ENCODE measurements at regions of chr13 and their contacts with region 1.

Region 1: GRCh38 chr13:36858290-36858689 is 39.3 kb downstream of the RFXAP start:
- DNase-seq: peak; percentile 26
- H3K4me3 ChIP-seq: no peak overlapping the region
- H3K27ac ChIP-seq: no peak overlapping the region
- H3K4me1 ChIP-seq: no peaks in the 10 kb centered on the region
- H3K27me3 ChIP-seq: no peaks in the 10 kb centered on the region
- CTCF ChIP-seq: peak in 3 of 4 experiments; percentile 46 to 66 (median 53)
- POLR2A ChIP-seq: no peak

Region 2: GRCh38 chr13:36981156-36981743 is 123.0 kb after region 1 on chr13:
- intact Hi-C with region 1: loop called (anchors 2 kb)
- DNase-seq: no peak
- H3K4me3 ChIP-seq: no peak overlapping the region
- H3K27ac ChIP-seq: no peak overlapping the region
- H3K4me1 ChIP-seq: no peaks in the 10 kb centered on the region
- H3K27me3 ChIP-seq: no peaks in the 10 kb centered on the region
- CTCF ChIP-seq: peak; percentile 19 to 70 (median 54)
- POLR2A ChIP-seq: no peak